ENCODE measurements at regions of chr6 and their contacts with region 1.

Region 1: GRCh38 chr6:90251295-90251992 is 45.2 kb downstream of the BACH2 start:
- DNase-seq: no peak
- H3K4me3 Mint-ChIP-seq: peak overlapping the region; percentile 34
- H3K27ac Mint-ChIP-seq: peak overlapping the region; percentile 90
- H3K4me1 Mint-ChIP-seq: peaks cover 84% of the 10 kb centered on the region
- H3K27me3 Mint-ChIP-seq: peaks cover 2% of the 10 kb centered on the region

Region 2: GRCh38 chr6:90025523-90026061 is 225.9 kb before region 1 on chr6:
- intact Hi-C with region 1: loop called (anchors 1 kb)
- DNase-seq: no peak
- H3K4me3 Mint-ChIP-seq: peak overlapping the region; percentile 69
- H3K27ac Mint-ChIP-seq: peak overlapping the region; percentile 95
- H3K4me1 Mint-ChIP-seq: peaks cover 77% of the 10 kb centered on the region
- H3K27me3 Mint-ChIP-seq: no peaks in the 10 kb centered on the region

Region 3: GRCh38 chr6:90139272-90139817 is 112.1 kb before region 1 on chr6:
- intact Hi-C with region 1: no loop called
- DNase-seq: no peak
- H3K4me3 Mint-ChIP-seq: no peak overlapping the region
- H3K27ac Mint-ChIP-seq: no peak overlapping the region
- H3K4me1 Mint-ChIP-seq: peaks cover 49% of the 10 kb centered on the region
- H3K27me3 Mint-ChIP-seq: peaks cover 6% of the 10 kb centered on the region

Region 4: DNA sequence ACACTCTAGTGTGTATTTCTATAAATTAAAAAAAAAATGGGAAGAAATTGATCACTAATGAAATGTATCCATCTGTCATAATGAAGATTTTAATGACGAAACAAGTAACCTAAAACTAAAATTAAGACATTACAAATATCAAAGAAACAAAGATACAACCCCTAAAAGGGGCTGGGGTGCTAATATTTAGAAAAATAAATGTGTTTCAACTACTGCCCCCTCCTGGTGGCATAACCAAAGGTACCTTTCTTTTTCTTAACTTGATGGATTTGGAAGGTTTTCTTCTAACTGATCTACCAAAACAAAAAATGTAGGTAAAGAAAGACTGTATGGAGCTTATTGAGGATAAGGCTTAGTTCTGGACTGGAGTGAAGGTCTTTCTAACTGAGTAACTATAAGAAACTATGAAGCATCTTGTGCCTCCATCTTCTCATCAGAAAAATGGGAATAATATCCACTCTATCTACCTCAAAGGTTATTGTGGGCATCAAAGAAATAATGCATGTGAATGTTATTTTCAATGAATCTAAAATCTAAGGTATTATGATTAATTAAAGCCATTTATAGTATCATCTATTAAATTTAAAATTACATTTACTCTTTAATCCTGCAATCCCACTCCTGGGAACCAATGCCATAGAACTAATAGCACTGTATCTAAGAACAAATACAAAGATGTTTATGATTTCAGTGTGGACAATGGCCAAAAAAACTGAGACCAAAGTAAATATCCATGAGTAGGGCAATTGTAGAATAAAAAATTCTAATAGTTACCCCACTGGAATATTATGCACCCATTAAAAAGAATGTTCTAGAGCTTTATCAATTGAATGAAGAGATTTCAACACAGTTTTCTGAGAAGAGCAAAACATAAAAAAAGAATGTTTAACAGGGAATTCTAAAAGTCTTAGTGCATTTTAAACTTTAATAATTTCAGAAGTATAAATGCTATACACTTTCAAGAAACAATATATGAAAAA is 72.0 kb before region 1 on chr6:
- intact Hi-C with region 1: loop called (anchors 1 kb)
- DNase-seq: no peak
- H3K4me3 Mint-ChIP-seq: no peak overlapping the region
- H3K27ac Mint-ChIP-seq: no peak overlapping the region
- H3K4me1 Mint-ChIP-seq: peaks cover 69% of the 10 kb centered on the region
- H3K27me3 Mint-ChIP-seq: no peaks in the 10 kb centered on the region

Region 5: DNA sequence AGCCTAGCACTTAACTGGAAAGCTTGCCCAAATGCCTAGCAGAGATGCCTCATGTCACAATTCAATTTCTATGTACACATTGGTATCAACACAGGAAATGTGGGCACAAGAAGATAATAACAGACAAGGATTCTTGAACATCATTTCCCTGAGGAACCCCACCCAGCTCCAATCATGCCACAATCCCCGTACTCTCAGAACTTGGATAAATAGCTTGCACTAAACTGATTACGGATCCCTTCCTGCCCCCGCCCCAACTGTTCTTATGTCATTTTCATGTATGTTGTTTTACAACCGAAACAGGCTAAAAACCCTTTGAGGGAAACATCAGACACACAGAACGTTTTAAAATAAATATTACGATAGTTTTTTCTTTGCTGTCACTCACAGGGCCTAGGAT is 41.9 kb before region 1 on chr6:
- intact Hi-C with region 1: no loop called
- DNase-seq: no peak
- H3K4me3 Mint-ChIP-seq: no peak overlapping the region
- H3K27ac Mint-ChIP-seq: peak overlapping the region; percentile 23
- H3K4me1 Mint-ChIP-seq: peaks cover 56% of the 10 kb centered on the region
- H3K27me3 Mint-ChIP-seq: peaks cover 2% of the 10 kb centered on the region

Region 6: GRCh38 chr6:90230548-90231215 is 20.8 kb before region 1 on chr6:
- intact Hi-C with region 1: loop called (anchors 1 kb)
- DNase-seq: no peak
- H3K4me3 Mint-ChIP-seq: peak overlapping the region; percentile 10
- H3K27ac Mint-ChIP-seq: peak overlapping the region; percentile 31
- H3K4me1 Mint-ChIP-seq: peaks cover 89% of the 10 kb centered on the region
- H3K27me3 Mint-ChIP-seq: no peaks in the 10 kb centered on the region

Region 7: DNA sequence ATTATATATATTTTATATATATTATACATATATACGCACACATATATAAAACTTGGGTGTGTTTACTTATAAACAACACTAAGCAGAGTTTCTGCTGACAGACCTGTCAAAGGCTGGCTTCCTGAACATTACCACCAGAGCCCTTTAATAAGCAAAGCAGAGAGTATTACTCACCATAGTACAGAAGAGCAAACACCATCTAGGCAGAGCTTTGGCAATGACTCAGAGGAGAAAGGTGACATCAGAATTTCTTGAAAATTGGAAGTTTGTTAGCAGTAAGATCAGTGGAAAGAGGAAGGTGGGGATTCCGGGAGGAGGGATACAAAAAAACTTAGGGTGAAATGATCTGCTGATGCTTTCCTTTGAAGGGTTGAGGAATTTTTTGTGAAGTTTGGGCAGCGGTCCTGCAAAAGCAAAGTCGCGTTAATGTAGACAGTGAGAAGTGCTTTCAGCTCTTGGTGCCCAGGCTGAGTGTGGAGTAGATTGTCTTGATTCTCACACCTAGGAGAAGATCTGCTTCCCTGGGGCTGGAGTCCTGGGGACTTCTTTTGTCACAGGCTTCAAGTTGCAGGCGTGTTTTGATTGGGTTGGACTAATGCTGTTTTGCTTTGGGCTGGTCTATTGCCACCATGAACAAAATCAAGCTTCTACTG is 154.8 kb after region 1 on chr6:
- intact Hi-C with region 1: loop called (anchors 1 kb)
- DNase-seq: peak; percentile 26
- H3K4me3 Mint-ChIP-seq: peak overlapping the region; percentile 3
- H3K27ac Mint-ChIP-seq: peak overlapping the region; percentile 79
- H3K4me1 Mint-ChIP-seq: peaks cover 73% of the 10 kb centered on the region
- H3K27me3 Mint-ChIP-seq: peaks cover 4% of the 10 kb centered on the region

Region 8: GRCh38 chr6:90478789-90479602 is 227.6 kb after region 1 on chr6:
- intact Hi-C with region 1: loop called (anchors 1 kb)
- DNase-seq: peak; percentile 76
- H3K4me3 Mint-ChIP-seq: peak overlapping the region; percentile 3
- H3K27ac Mint-ChIP-seq: peak overlapping the region; percentile 85
- H3K4me1 Mint-ChIP-seq: peaks cover 56% of the 10 kb centered on the region
- H3K27me3 Mint-ChIP-seq: peaks cover 2% of the 10 kb centered on the region

Measured in activated T-helper 1 cell treated with anti-CD3 and anti-CD28 coated beads, Interleukin-12 subunit alpha, Interleukin-12 subunit beta, Interleukin-2, Interleukin-4 antibody, amounts not matched to agents 30 ng/mL and 10 ng/mL and 1 ng/mL, durations not matched to agents 14 hours and 24 hours and 36 hours (primary cell).